Activated CD4-positive, alpha-beta memory T cell treated with anti-CD3 and anti-CD28 coated beads for 36 hours (primary cell): ENCODE measurements at regions of chr6 and their contacts with region 1.

Region 1: GRCh38 chr6:5030596-5031136 is 26.8 kb upstream of the RPP40 start:
- DNase-seq: peak; percentile 88
- H3K4me3 Mint-ChIP-seq: no peak overlapping the region
- H3K27ac Mint-ChIP-seq: no peak overlapping the region
- H3K4me1 Mint-ChIP-seq: peaks cover 9% of the 10 kb centered on the region
- H3K27me3 Mint-ChIP-seq: peaks cover 3% of the 10 kb centered on the region

Region 2: GRCh38 chr6:4402439-4402976 is 628.2 kb before region 1 on chr6:
- CTCF ChIA-PET with region 1: no interaction called
- POLR2A ChIA-PET with region 1: no interaction called
- intact Hi-C with region 1: no loop called
- DNase-seq: no peak
- H3K4me3 Mint-ChIP-seq: no peak overlapping the region
- H3K27ac Mint-ChIP-seq: no peak overlapping the region
- H3K4me1 Mint-ChIP-seq: no peaks in the 10 kb centered on the region
- H3K27me3 Mint-ChIP-seq: peaks cover 4% of the 10 kb centered on the region

Region 3: GRCh38 chr6:4727671-4728435 is 302.8 kb before region 1 on chr6:
- CTCF ChIA-PET with region 1: no interaction called
- POLR2A ChIA-PET with region 1: no interaction called
- intact Hi-C with region 1: loop called (anchors 5 kb)
- DNase-seq: peak; percentile 26
- H3K4me3 Mint-ChIP-seq: no peak overlapping the region
- H3K27ac Mint-ChIP-seq: no peak overlapping the region
- H3K4me1 Mint-ChIP-seq: peaks cover 8% of the 10 kb centered on the region
- H3K27me3 Mint-ChIP-seq: peaks cover 20% of the 10 kb centered on the region

Region 4: DNA sequence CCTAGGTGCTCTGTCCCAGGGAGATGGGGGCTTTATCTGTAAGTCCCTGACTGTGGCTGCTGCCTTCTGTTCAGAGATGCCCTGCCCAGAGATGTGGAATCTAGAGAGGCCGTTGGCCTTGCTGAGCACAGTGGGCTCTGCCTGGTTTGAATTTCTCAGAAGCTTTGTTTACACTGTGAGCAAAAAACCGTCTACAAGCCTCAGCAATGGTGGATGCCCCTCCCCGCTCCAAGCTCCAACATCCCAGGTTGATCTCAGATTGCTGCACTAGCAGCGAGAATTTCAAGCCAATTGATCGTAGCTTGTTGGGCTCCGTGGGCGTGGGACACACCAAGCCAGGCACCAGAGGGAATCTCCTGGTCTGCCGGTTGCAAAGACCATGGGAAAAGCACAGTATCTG is 10.5 kb before region 1 on chr6:
- CTCF ChIA-PET with region 1: interaction called, 10 read pairs
- POLR2A ChIA-PET with region 1: no interaction called
- intact Hi-C with region 1: no loop called
- DNase-seq: no peak
- H3K4me3 Mint-ChIP-seq: no peak overlapping the region
- H3K27ac Mint-ChIP-seq: no peak overlapping the region
- H3K4me1 Mint-ChIP-seq: no peaks in the 10 kb centered on the region
- H3K27me3 Mint-ChIP-seq: peaks cover 4% of the 10 kb centered on the region

Region 5: DNA sequence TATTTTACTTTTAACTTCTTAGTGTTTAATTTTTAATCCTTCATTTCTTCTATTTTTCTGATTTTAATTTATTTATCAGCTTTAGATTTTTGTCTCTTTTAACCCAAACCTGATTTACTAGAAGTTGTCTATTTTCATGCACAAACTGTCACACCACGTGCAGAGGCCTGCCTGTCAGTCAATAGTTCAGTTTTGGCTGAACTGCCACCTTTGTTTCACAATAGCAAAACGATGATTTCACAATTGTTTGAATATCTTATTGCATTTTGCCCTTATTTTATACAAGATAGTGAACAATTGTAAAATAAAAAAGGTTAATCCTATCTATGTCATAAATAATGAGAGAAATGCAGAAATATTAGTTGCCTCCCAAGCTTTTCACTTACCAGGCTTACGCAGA is 30.5 kb after region 1 on chr6:
- CTCF ChIA-PET with region 1: no interaction called
- POLR2A ChIA-PET with region 1: no interaction called
- intact Hi-C with region 1: no loop called
- DNase-seq: no peak
- H3K4me3 Mint-ChIP-seq: no peak overlapping the region
- H3K27ac Mint-ChIP-seq: no peak overlapping the region
- H3K4me1 Mint-ChIP-seq: no peaks in the 10 kb centered on the region
- H3K27me3 Mint-ChIP-seq: peaks cover 3% of the 10 kb centered on the region

Region 6: DNA sequence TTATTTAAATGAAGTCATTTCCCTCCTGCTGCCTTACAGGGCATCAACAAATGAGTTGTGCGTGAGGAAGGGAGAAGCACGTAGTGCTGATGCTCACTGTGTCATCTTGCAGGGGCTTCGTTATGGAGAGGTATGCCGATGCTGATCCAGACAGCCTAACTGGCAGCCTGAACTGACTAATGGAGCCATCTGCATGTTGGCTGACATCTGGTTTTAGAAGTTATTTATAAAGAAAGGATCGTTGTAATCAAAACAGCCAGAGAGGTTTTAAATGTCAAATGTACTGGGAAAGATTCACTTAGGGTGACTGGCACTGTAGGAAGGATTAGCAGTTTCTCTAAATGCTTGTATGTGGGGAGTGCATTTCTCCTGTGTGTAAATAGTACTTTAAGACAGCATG is 285.2 kb after region 1 on chr6:
- CTCF ChIA-PET with region 1: no interaction called
- POLR2A ChIA-PET with region 1: no interaction called
- intact Hi-C with region 1: no loop called
- DNase-seq: no peak
- H3K4me3 Mint-ChIP-seq: no peak overlapping the region
- H3K27ac Mint-ChIP-seq: no peak overlapping the region
- H3K4me1 Mint-ChIP-seq: peaks cover 17% of the 10 kb centered on the region
- H3K27me3 Mint-ChIP-seq: no peaks in the 10 kb centered on the region